Activated naive CD4-positive, alpha-beta T cell treated with anti-CD3 and anti-CD28 coated beads for 36 hours (primary cell): ENCODE measurements at regions of chr14 and their contacts with region 1.

Region 1: GRCh38 chr14:75176142-75176820 is at the start of gene TMED10:
- DNase-seq: peak; percentile 93
- H3K4me3 Mint-ChIP-seq: peak within 1 kb of the TSS; percentile 91
- H3K27ac Mint-ChIP-seq: peak within 1 kb of the TSS; percentile 97
- H3K4me1 Mint-ChIP-seq: peaks cover 43% of the 10 kb centered on the region
- H3K27me3 Mint-ChIP-seq: no peaks in the 10 kb centered on the region
- total RNA-seq, gene TMED10: 151 to 156 TPM

Region 2: GRCh38 chr14:74084277-74085046 is 1091.8 kb before region 1 on chr14 and contains the starts of genes ALDH6A1 and LIN52:
- CTCF ChIA-PET with region 1: no interaction called
- intact Hi-C with region 1: loop called (anchors 5 kb)
- DNase-seq: peak; percentile 100
- H3K4me3 Mint-ChIP-seq: peak within 1 kb of the TSS; percentile 99
- H3K27ac Mint-ChIP-seq: peak within 1 kb of the TSS; percentile 95
- H3K4me1 Mint-ChIP-seq: peaks cover 38% of the 10 kb centered on the region
- H3K27me3 Mint-ChIP-seq: no peaks in the 10 kb centered on the region
- total RNA-seq, gene ALDH6A1: 24.0 to 25.3 TPM
- total RNA-seq, gene LIN52: 10.7 to 13.6 TPM

Region 3: DNA sequence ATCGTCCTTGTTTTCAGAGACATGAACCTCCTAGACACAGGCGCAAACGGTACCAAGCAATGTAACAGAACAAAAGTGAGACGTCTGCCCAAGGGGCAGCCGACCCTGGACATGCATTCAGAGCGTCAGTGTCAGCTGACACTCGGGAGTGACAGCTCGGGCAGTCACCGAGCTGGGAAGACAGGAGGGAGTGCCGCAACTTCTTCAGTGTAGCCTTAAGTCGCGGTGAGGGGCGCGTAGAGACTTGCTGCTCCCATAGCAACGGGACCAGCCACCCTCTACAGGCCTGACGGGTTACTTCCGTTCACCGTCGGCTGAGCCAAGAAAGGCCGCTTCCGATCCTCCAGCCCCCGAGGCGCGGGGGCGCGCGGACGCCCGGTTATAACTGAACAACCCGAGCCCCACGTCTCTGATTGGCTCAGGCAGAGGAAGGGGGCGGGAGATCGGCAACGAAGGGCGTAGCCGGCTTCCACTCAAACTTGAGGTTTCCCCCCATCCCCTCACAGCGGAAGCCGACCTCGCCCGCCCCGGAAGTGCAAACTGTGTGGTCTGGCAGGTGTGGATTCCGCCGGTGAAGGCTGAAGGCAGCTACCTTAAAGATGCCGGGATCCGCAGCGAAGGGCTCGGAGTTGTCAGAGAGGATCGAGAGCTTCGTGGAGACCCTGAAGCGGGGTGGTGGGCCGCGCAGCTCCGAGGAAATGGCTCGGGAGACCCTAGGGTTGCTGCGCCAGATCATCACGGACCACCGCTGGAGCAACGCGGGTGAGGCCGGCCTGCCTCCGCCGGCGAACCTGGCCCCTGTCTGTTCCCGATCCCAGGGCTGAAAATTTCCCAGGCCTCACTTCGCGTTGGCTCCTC is 173.7 kb before region 1 on chr14 and contains the start of gene EIF2B2:
- CTCF ChIA-PET with region 1: no interaction called
- intact Hi-C with region 1: loop called (anchors 1 kb)
- DNase-seq: peak; percentile 99
- H3K4me3 Mint-ChIP-seq: peak within 1 kb of the TSS; percentile 99
- H3K27ac Mint-ChIP-seq: peak within 1 kb of the TSS; percentile 89
- H3K4me1 Mint-ChIP-seq: peaks cover 31% of the 10 kb centered on the region
- H3K27me3 Mint-ChIP-seq: no peaks in the 10 kb centered on the region
- total RNA-seq, gene EIF2B2: 64.8 to 65.4 TPM

Region 4: DNA sequence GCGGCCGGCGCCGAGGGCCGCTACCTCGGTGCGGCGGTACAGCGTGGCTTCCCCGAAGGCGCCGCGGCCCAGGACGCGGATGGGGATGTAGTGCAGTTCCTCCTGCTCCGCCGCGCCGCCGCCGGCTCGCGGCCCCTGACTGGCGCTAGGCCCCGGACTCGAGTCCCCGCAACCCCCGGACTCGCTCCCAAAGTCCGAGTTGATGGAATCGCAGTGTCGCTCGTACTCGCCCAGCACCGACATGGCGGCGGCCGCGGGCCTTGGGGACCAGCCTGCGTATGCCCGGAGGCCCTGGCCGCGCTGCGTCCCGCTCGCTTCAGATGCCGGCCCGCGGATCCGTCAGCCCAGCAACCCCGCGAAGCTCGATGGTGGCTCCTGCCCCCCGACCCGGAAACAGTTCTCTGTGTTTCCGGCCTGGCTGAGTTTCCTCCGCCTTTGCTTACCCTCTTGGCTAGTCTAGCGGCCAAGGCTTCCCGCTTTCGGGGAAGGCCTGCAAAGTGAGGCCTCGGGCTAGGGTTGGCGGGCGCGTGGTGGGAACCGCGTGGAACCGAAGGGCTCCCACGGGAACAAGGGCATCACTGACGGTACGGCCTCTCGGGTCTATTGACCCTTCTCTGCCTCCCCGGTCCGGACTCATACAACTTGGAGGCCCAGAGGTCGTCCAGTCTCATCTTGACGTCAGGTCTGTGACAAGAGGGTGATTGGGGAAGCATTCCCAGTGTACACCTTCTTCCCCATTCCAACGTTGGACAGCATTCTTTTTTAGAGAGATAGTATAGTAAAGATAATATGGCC is 49.4 kb before region 1 on chr14 and contains the start of gene NEK9:
- CTCF ChIA-PET with region 1: no interaction called
- intact Hi-C with region 1: loop called (anchors 1 kb)
- DNase-seq: peak; percentile 92
- H3K4me3 Mint-ChIP-seq: peak within 1 kb of the TSS; percentile 96
- H3K27ac Mint-ChIP-seq: peak within 1 kb of the TSS; percentile 97
- H3K4me1 Mint-ChIP-seq: peaks cover 40% of the 10 kb centered on the region
- H3K27me3 Mint-ChIP-seq: no peaks in the 10 kb centered on the region
- total RNA-seq, gene NEK9: 53.5 to 55.6 TPM

Region 5: DNA sequence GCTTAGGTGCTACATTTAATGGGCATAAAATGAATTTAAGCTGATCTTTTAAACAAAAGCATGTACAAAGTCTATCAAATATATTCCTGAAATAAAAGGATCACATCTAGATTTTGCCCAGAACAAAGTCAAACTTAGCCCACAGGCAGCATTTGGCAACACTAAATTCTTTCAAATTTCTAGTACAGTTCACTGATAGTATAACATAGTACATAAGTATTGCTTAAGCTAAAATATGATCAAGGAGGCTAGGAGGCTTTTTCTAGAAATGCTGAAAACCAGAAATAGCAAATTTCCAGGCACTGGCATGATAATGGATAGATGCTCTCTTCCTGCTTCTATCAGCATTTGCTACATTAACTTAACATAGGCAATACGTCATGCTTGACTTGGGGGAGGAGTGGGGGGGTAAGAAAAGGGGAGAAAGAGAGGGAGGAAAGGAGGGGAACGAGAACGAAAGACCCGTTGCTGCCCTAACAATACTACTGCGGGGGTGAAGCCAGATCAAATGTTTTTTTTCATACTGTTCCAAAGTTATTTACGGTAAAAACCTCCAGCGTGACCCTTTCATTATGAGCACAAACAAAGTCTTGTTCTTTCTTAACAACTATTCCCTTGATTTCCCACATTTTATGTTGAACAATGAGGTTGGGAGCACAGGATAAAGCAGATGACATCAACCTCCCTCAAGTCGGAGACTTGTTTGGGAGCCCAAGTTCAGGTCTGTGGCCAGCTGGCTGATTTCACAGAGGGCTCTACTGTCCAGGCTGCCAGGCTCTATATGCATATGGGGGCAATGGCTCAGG is 10.5 kb before region 1 on chr14:
- CTCF ChIA-PET with region 1: no interaction called
- intact Hi-C with region 1: no loop called
- DNase-seq: no peak
- H3K4me3 Mint-ChIP-seq: no peak overlapping the region
- H3K27ac Mint-ChIP-seq: no peak overlapping the region
- H3K4me1 Mint-ChIP-seq: peaks cover 61% of the 10 kb centered on the region
- H3K27me3 Mint-ChIP-seq: no peaks in the 10 kb centered on the region

Region 6: GRCh38 chr14:75249251-75249957 is 73.1 kb after region 1 on chr14:
- CTCF ChIA-PET with region 1: no interaction called
- intact Hi-C with region 1: loop called (anchors 1 kb)
- DNase-seq: peak; percentile 90
- H3K4me3 Mint-ChIP-seq: no peak overlapping the region
- H3K27ac Mint-ChIP-seq: peak overlapping the region; percentile 66
- H3K4me1 Mint-ChIP-seq: peaks cover 54% of the 10 kb centered on the region
- H3K27me3 Mint-ChIP-seq: no peaks in the 10 kb centered on the region

Region 7: DNA sequence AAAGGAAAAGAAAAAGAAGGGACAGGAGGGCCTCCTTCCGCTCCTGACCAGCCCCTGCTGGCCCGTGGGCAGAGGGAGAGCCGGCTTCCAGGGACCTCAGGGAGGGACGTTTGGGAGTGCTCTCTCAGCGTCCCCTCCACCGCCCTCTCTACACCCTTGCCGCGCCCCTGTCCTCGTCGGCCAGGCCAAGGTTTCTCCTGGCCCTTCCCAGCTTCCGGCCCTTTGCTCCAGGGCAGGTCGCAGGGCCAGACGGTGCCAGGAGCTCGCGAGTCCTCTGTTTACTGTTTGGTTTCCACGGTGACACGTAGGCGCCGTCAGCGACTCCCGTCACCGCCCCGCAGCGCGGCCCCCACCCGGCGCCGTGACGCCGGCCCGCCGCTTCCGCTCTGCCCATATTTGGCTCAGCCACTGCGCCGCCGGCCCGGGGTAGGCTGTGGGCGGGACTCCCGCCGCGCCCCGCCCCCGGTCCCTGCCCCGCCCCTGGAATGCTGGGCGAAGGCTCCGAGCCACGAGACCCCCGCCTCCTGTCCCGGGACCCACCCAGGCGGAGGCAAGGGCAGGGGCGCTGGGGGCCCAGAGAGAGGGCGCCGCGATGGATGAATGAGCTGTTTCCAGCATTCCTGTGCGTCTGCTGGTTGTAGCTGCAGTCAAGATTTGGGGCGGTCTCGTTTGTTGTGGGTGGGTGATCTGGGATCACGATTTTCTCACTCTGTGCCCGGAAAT is 117.8 kb after region 1 on chr14:
- CTCF ChIA-PET with region 1: interaction called, 7 read pairs
- intact Hi-C with region 1: loop called (anchors 1 kb)
- DNase-seq: peak; percentile 91
- H3K4me3 Mint-ChIP-seq: peak overlapping the region; percentile 80
- H3K27ac Mint-ChIP-seq: no peak overlapping the region
- H3K4me1 Mint-ChIP-seq: peaks cover 20% of the 10 kb centered on the region
- H3K27me3 Mint-ChIP-seq: peaks cover 3% of the 10 kb centered on the region

Region 8: GRCh38 chr14:75531660-75532317 is 355.5 kb after region 1 on chr14:
- CTCF ChIA-PET with region 1: no interaction called
- intact Hi-C with region 1: no loop called
- DNase-seq: no peak
- H3K4me3 Mint-ChIP-seq: peak overlapping the region; percentile 30
- H3K27ac Mint-ChIP-seq: peak overlapping the region; percentile 75
- H3K4me1 Mint-ChIP-seq: peaks cover 83% of the 10 kb centered on the region
- H3K27me3 Mint-ChIP-seq: no peaks in the 10 kb centered on the region

Region 9: GRCh38 chr14:75660630-75661494 is 484.6 kb after region 1 on chr14 and contains the starts of genes ERG28 and TTLL5:
- CTCF ChIA-PET with region 1: no interaction called
- intact Hi-C with region 1: loop called (anchors 1 kb)
- DNase-seq: peak; percentile 98
- H3K4me3 Mint-ChIP-seq: peak within 1 kb of the TSS; percentile 100
- H3K27ac Mint-ChIP-seq: peak within 1 kb of the TSS; percentile 98
- H3K4me1 Mint-ChIP-seq: peaks cover 18% of the 10 kb centered on the region
- H3K27me3 Mint-ChIP-seq: no peaks in the 10 kb centered on the region
- total RNA-seq, gene ERG28: 25.6 to 25.7 TPM
- total RNA-seq, gene TTLL5: 23.8 to 25.1 TPM